Panc1 (cell line): ENCODE measurements at regions of chr17 and their contacts with region 1.

Region 1: DNA sequence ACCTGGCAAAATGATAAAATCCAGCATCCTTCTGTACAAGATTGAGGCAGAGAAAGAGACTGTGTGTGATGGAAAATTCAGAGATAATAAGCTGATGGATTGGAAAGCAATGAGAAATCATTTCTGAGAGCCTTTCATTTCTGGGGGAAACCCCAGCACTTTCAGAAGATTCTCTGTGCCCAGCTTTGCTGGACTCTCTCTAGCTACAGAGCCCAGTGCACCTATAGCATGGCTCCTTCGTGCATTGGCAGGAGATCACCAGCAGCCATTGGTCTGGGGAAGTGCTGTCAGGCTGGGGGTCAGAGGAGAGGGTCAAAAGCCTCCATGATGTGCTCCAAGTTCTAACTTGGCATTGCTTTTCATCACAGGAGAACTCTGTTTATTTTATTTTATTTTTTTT is 259.9 kb downstream of the SOX9 start:
- DNase-seq: no peak
- ATAC-seq: no peak
- H3K4me3 ChIP-seq: no peak overlapping the region
- H3K27ac ChIP-seq: no peak overlapping the region
- H3K4me1 ChIP-seq: peaks cover 7% of the 10 kb centered on the region
- H3K27me3 ChIP-seq: no peaks in the 10 kb centered on the region
- CTCF ChIP-seq: no peak

Region 2: DNA sequence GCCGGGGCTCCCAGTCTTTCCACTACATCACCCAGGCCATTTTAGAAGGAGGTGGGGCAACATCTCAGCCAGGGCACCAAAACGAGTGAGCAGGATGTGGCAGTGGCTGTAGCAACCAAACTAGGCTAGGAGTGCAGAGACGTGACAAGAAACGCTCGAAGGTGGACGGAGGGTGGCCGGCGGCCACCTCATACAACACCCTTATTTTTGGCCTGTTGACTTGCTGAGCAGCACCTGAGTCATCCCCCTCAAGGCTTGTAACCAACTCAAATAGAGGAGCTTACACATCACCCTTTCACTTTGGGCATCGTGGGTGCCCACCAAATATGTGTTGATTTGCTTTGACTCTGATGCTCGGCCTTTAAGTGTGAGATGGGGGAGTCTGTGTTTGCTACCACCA is 283.6 kb before region 1 on chr17:
- CTCF ChIA-PET with region 1: no interaction called
- POLR2A ChIA-PET with region 1: interaction called, 14 read pairs
- in situ Hi-C with region 1: no loop called
- intact Hi-C with region 1: no loop called
- DNase-seq: peak; percentile 27
- ATAC-seq: peak; percentile 73; the same call in 1 of the 2 replicates
- H3K4me3 ChIP-seq: no peak overlapping the region
- H3K27ac ChIP-seq: no peak overlapping the region
- H3K4me1 ChIP-seq: no peaks in the 10 kb centered on the region
- H3K27me3 ChIP-seq: no peaks in the 10 kb centered on the region
- CTCF ChIP-seq: no peak

Region 3: GRCh38 chr17:72236915-72237633 is 143.7 kb before region 1 on chr17:
- CTCF ChIA-PET with region 1: no interaction called
- POLR2A ChIA-PET with region 1: no interaction called
- in situ Hi-C with region 1: no loop called
- intact Hi-C with region 1: no loop called
- DNase-seq: no peak
- ATAC-seq: 0 out of 2 replicates have a peak, but pooled peaks have one; percentile 7
- H3K4me3 ChIP-seq: no peak overlapping the region
- H3K27ac ChIP-seq: peak overlapping the region; percentile 15; the same call in 1 of the 2 replicates
- H3K4me1 ChIP-seq: peaks cover 7% of the 10 kb centered on the region; the same call in 1 of the 2 replicates
- H3K27me3 ChIP-seq: no peaks in the 10 kb centered on the region
- CTCF ChIP-seq: no peak